ENCODE measurements at regions of chr18 and their contacts with region 1.

Region 1: GRCh38 chr18:49858309-49859020 is 45.1 kb upstream of the ACAA2 start:
- DNase-seq: peak; percentile 48
- ATAC-seq: no peak
- H3K4me3 ChIP-seq: no peak overlapping the region
- H3K4me3 Mint-ChIP-seq: no peak overlapping the region
- H3K27ac ChIP-seq: no peak overlapping the region
- H3K27ac Mint-ChIP-seq: no peak overlapping the region
- H3K4me1 ChIP-seq: no peaks in the 10 kb centered on the region
- H3K4me1 Mint-ChIP-seq: no peaks in the 10 kb centered on the region
- H3K27me3 ChIP-seq: no peaks in the 10 kb centered on the region
- H3K27me3 Mint-ChIP-seq: no peaks in the 10 kb centered on the region
- CTCF ChIP-seq: peak; percentile 79

Region 2: GRCh38 chr18:48475635-48476549 is 1382.6 kb before region 1 on chr18:
- CTCF ChIA-PET with region 1: interaction called, 10 read pairs
- POLR2A ChIA-PET with region 1: no interaction called
- intact Hi-C with region 1: no loop called
- DNase-seq: peak; percentile 48
- ATAC-seq: no peak
- H3K4me3 ChIP-seq: no peak overlapping the region
- H3K4me3 Mint-ChIP-seq: no peak overlapping the region
- H3K27ac ChIP-seq: no peak overlapping the region
- H3K27ac Mint-ChIP-seq: no peak overlapping the region
- H3K4me1 ChIP-seq: no peaks in the 10 kb centered on the region
- H3K4me1 Mint-ChIP-seq: no peaks in the 10 kb centered on the region
- H3K27me3 ChIP-seq: peaks cover 0 to 15% (median 3%) of the 10 kb centered on the region in 4 experiments
- H3K27me3 Mint-ChIP-seq: peaks cover 30% of the 10 kb centered on the region
- CTCF ChIP-seq: peak; percentile 61

Region 3: GRCh38 chr18:49510393-49511115 is 347.9 kb before region 1 on chr18:
- CTCF ChIA-PET with region 1: interaction called, 127 read pairs
- POLR2A ChIA-PET with region 1: no interaction called
- intact Hi-C with region 1: no loop called
- DNase-seq: peak; percentile 70
- ATAC-seq: peak; percentile 39
- H3K4me3 ChIP-seq: no peak overlapping the region
- H3K4me3 Mint-ChIP-seq: no peak overlapping the region
- H3K27ac ChIP-seq: no peak overlapping the region
- H3K27ac Mint-ChIP-seq: no peak overlapping the region
- H3K4me1 ChIP-seq: no peaks in the 10 kb centered on the region
- H3K4me1 Mint-ChIP-seq: no peaks in the 10 kb centered on the region
- H3K27me3 ChIP-seq: peaks cover 0 to 3% (median 0%) of the 10 kb centered on the region in 4 experiments
- H3K27me3 Mint-ChIP-seq: peaks cover 22% of the 10 kb centered on the region
- CTCF ChIP-seq: peak; percentile 82

Region 4: DNA sequence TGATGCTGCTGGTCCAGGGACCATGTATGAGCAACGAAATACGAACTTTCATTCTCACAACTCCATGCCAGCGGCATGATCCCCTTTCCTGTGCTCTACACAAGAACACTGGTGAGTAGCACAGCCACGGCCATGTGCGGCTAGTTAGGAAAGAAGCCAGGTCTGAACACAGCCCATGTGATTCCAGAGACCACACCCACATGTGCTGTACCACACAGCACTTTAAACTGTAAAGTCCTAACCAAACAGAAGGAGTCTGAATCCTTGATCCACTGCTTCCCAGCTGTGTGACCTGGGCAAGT is 12.2 kb before region 1 on chr18:
- CTCF ChIA-PET with region 1: interaction called, 11 read pairs
- POLR2A ChIA-PET with region 1: no interaction called
- intact Hi-C with region 1: no loop called
- DNase-seq: no peak
- ATAC-seq: no peak
- H3K4me3 ChIP-seq: no peak overlapping the region
- H3K4me3 Mint-ChIP-seq: no peak overlapping the region
- H3K27ac ChIP-seq: no peak overlapping the region
- H3K27ac Mint-ChIP-seq: no peak overlapping the region
- H3K4me1 ChIP-seq: no peaks in the 10 kb centered on the region
- H3K4me1 Mint-ChIP-seq: no peaks in the 10 kb centered on the region
- H3K27me3 ChIP-seq: peaks cover 0 to 2% (median 0%) of the 10 kb centered on the region in 4 experiments
- H3K27me3 Mint-ChIP-seq: peaks cover 20% of the 10 kb centered on the region
- CTCF ChIP-seq: no peak

Measured in B cell (primary cell).